Heart left ventricle (tissue), 16 donors: ENCODE measurements at regions of chr5 and their contacts with region 1.

Region 1: DNA sequence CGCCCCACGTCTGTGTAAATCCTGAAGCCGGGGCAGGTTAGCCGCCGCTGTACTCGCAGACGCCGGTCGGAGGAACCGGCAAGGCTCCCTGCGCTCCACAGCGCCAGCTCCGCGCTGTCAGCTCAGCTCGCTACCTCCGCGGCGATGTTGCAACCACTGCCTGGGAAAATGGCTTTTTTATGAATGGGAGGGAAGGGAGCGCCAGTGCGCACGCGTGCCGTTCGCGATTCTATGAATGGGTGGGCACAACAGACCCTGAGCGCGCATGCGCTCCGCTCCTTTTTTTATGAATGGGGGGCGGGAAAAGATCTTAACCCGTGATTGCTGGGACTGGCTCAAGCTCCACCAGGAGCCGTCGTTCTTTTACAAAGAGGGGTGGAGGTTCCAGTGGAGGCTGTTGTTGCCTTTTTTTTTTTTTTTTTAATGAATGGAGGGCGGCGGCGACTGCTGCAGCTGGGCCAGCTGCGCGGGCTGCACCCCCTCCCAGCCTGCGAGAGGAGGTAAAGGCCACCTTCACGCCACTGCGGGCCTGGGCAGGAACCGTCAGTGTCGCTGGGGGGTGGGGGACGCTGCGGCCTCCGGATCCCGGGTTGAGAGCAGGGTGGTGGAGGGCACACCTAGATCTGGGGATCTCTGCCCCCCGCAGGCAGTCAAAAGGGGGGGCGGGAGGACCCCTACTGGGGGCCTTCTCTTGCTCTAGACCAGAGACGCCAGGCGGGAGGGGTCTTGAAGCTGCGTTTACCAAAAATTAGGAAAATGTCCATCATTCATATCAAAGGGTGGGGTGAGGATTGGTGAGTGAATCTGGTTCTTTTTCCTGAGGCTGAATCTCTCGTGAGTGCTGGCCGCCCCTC is at the start of gene SPRY4:
- DNase-seq: peak; percentile 93 to 96 (median 95)
- ATAC-seq: peak; percentile 78 to 87 (median 80)
- H3K4me3 ChIP-seq: peak within 1 kb of the TSS; percentile 59 to 99 (median 78)
- H3K27ac ChIP-seq: peak within 1 kb of the TSS; percentile 81 to 99 (median 91)
- H3K4me1 ChIP-seq: peaks cover 0 to 57% (median 39%) of the 10 kb centered on the region in 12 donors
- H3K27me3 ChIP-seq: peaks cover 0 to 54% (median 0%) of the 10 kb centered on the region in 9 donors
- CTCF ChIP-seq: peak in 4 of 12 donors; percentile 5 to 13 (median 6)
- POLR2A ChIP-seq: peak; percentile 14 to 93
- total RNA-seq, gene SPRY4: 4.5 to 21.3 (median 13.8) TPM

Region 2: GRCh38 chr5:142053426-142054151 is 271.5 kb before region 1 on chr5:
- intact Hi-C with region 1: no loop called
- DNase-seq: peak in 3 of 5 donors; percentile 22 to 33 (median 30)
- ATAC-seq: peak; percentile 48 to 91 (median 84)
- H3K4me3 ChIP-seq: no peak overlapping the region
- H3K27ac ChIP-seq: peak overlapping the region in 5 of 12 donors; percentile 20 to 79 (median 39)
- H3K4me1 ChIP-seq: peaks cover 0 to 32% (median 10%) of the 10 kb centered on the region in 12 donors
- H3K27me3 ChIP-seq: no peaks in the 10 kb centered on the region
- CTCF ChIP-seq: no peak
- POLR2A ChIP-seq: no peak

Region 3: GRCh38 chr5:142151436-142152383 is 173.4 kb before region 1 on chr5:
- intact Hi-C with region 1: loop called in 5 of 10 experiments (anchors 5 to 10 kb)
- DNase-seq: peak in 3 of 5 donors; percentile 41 to 63 (median 52)
- ATAC-seq: peak in 3 of 4 donors; percentile 65 to 70 (median 66)
- H3K4me3 ChIP-seq: no peak overlapping the region
- H3K27ac ChIP-seq: peak overlapping the region in 1 of 12 donors; percentile 14
- H3K4me1 ChIP-seq: peaks cover 0 to 10% (median 3%) of the 10 kb centered on the region in 12 donors
- H3K27me3 ChIP-seq: no peaks in the 10 kb centered on the region
- CTCF ChIP-seq: peak; percentile 82 to 95 (median 88)
- POLR2A ChIP-seq: no peak

Region 4: GRCh38 chr5:142280066-142280911 is 44.8 kb before region 1 on chr5:
- intact Hi-C with region 1: loop called in 2 of 10 experiments (anchors 5 kb)
- DNase-seq: peak; percentile 78 to 88 (median 87)
- ATAC-seq: peak; percentile 81 to 93 (median 92)
- H3K4me3 ChIP-seq: no peak overlapping the region
- H3K27ac ChIP-seq: peak overlapping the region; percentile 37 to 87 (median 74)
- H3K4me1 ChIP-seq: peaks cover 8 to 44% (median 23%) of the 10 kb centered on the region in 12 donors
- H3K27me3 ChIP-seq: peaks cover 0 to 3% (median 0%) of the 10 kb centered on the region in 9 donors
- CTCF ChIP-seq: no peak
- POLR2A ChIP-seq: no peak

Region 5: GRCh38 chr5:142287096-142287972 is 37.8 kb before region 1 on chr5:
- intact Hi-C with region 1: loop called in 2 of 10 experiments (anchors 5 kb)
- DNase-seq: no peak
- ATAC-seq: no peak
- H3K4me3 ChIP-seq: no peak overlapping the region
- H3K27ac ChIP-seq: peak overlapping the region in 5 of 12 donors; percentile 1 to 32 (median 17)
- H3K4me1 ChIP-seq: peaks cover 0 to 38% (median 19%) of the 10 kb centered on the region in 12 donors
- H3K27me3 ChIP-seq: no peaks in the 10 kb centered on the region
- CTCF ChIP-seq: no peak
- POLR2A ChIP-seq: no peak

Region 6: GRCh38 chr5:142356716-142357473 is 31.8 kb after region 1 on chr5:
- intact Hi-C with region 1: loop called in 6 of 10 experiments (anchors 1 to 5 kb)
- DNase-seq: peak; percentile 89 to 93 (median 91)
- ATAC-seq: peak; percentile 74 to 93 (median 92)
- H3K4me3 ChIP-seq: peak overlapping the region; percentile 52 to 73 (median 64)
- H3K27ac ChIP-seq: peak overlapping the region; percentile 85 to 97 (median 94)
- H3K4me1 ChIP-seq: peaks cover 0 to 22% (median 12%) of the 10 kb centered on the region in 12 donors
- H3K27me3 ChIP-seq: peaks cover 0 to 33% (median 0%) of the 10 kb centered on the region in 9 donors
- CTCF ChIP-seq: peak in 1 of 12 donors; percentile 16
- POLR2A ChIP-seq: peak; percentile 7 to 62

Region 7: DNA sequence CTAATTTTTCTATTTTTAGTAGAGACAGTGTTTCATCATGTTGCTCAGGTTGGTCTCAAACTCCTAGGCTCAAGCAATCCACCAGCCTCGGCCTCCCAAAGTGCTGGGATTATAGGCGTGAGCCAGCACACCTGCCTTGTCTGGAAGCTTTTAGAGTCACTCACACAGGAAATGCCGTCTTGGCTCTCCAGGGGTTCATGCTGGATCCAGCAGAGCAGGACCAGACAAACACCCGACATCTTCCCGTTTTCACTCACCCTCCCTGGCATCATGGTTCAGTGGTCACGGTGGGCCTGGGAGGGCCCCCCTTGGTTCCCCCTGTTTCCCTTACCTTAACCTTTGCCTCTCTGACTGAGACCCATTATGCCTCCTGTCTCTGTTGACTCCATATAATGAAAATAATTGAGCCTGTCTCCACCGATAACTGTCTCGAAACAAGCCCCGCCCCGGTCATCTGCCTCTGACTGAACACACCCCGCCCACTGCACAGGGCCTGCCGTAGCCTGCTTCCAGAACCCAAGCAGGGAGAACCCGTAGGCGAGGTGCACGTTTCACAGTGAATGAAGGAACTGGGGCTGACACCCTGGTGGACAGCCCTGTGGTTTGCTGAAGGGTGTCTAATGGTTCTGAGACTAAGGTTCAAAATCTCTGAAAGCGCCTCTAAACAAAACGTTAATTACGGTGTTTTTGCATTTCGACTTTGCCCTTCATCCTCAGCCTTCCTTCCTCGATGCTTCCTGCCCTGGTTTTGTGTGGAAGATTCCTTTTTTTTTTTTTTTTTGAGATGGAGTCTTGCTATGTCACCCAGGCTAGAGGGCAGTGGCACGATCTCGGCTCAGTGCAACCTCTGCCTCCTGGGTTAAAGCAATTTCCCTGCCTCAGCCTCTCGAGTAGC is 39.4 kb after region 1 on chr5:
- intact Hi-C with region 1: loop called in 3 of 10 experiments (anchors 5 kb)
- DNase-seq: peak; percentile 65 to 82 (median 73)
- ATAC-seq: peak in 3 of 4 donors; percentile 32 to 53 (median 48)
- H3K4me3 ChIP-seq: peak overlapping the region in 8 of 12 donors; percentile 2 to 34 (median 24)
- H3K27ac ChIP-seq: peak overlapping the region in 11 of 12 donors; percentile 54 to 91 (median 85)
- H3K4me1 ChIP-seq: peaks cover 0 to 30% (median 21%) of the 10 kb centered on the region in 12 donors
- H3K27me3 ChIP-seq: peaks cover 0 to 25% (median 0%) of the 10 kb centered on the region in 9 donors
- CTCF ChIP-seq: no peak
- POLR2A ChIP-seq: no peak

Region 8: DNA sequence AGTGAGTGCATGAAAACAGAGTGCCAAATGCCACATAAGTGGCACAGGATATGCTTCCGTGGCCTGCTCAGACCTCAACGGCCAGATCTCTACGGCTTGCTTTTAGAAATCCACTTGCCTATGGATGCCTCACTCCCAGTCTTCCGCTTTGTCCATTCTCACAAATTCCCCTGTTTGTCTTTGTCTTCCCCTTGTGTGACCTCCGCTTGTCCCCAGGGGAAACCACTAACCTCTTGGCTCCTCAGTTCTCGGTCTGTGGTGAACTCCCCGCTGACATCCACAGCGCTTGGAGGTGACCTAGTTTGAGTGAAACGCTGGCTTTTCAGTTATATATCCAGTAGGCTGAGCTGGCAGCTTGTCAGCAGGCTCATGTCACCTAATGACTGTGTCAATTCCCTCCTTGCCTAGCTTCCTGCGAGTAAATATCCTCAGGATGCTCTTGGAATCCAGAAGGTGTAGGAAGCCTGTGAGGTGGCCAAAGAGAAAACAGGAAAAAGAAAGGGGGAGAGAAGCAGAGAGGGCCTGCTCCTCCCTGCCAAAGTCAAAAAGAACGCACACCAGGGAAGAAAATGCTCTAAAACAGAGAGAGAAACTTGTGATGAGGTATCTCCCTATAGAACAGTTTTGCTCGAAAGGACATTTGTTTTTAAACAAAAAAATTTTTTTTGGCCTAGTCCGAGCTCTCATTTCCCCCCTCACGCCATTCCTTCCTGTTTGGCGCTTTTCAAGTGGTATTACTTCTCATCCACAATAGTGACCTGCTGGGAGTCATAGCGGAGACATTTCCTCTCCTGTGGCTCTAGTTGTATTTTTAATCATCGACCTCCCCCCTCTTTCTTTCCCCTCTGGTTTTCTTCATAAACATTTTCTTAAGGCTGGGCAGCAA is 101.3 kb after region 1 on chr5:
- intact Hi-C with region 1: loop called in 4 of 10 experiments (anchors 5 to 10 kb)
- DNase-seq: peak; percentile 77 to 86 (median 82)
- ATAC-seq: peak; percentile 53 to 86 (median 76)
- H3K4me3 ChIP-seq: peak overlapping the region in 2 of 12 donors; percentile 1 to 16
- H3K27ac ChIP-seq: peak overlapping the region; percentile 12 to 80 (median 52)
- H3K4me1 ChIP-seq: peaks cover 0 to 51% (median 30%) of the 10 kb centered on the region in 12 donors
- H3K27me3 ChIP-seq: no peaks in the 10 kb centered on the region
- CTCF ChIP-seq: no peak
- POLR2A ChIP-seq: no peak